ENCODE measurements at regions of chr13 and their contacts with region 1.

Region 1: GRCh38 chr13:48233046-48233907 is at the start of gene ITM2B:
- DNase-seq: peak; percentile 72 to 79 (median 76)
- H3K4me3 ChIP-seq: peak within 1 kb of the TSS; percentile 68 to 92
- H3K4me3 Mint-ChIP-seq: peak within 1 kb of the TSS; percentile 95 to 99 (median 98)
- H3K27ac ChIP-seq: peak within 1 kb of the TSS; percentile 98
- H3K27ac Mint-ChIP-seq: peak within 1 kb of the TSS; percentile 93 to 99 (median 98)
- H3K4me1 ChIP-seq: peaks cover 45% of the 10 kb centered on the region
- H3K4me1 Mint-ChIP-seq: peaks cover 37 to 69% (median 46%) of the 10 kb centered on the region in 4 donors
- H3K27me3 ChIP-seq: no peaks in the 10 kb centered on the region
- H3K27me3 Mint-ChIP-seq: no peaks in the 10 kb centered on the region
- total RNA-seq, gene ITM2B: 653 to 670 TPM

Region 2: DNA sequence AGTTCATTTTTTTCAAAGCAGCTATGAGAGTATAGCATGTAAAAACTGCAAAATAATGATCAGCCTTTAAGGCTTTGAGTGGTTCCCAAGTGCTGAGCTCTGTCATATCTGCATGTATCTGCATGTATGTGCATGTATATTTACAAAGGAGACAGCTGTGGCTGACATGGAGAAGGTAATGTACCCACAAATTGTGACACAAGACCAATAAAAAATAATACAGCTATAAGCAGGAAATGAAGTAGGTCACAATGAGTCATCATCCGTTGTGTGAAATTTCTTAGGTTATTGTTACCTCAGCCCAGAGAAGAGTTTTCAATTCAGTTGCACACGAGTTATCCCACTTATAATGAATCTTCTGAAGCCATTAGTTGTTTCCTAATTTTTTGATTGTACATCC is 77.4 kb before region 1 on chr13:
- CTCF ChIA-PET with region 1: interaction called, 22 read pairs
- POLR2A ChIA-PET with region 1: interaction called, 97 read pairs
- intact Hi-C with region 1: loop called (anchors 1 kb)
- DNase-seq: peak; percentile 69 to 83 (median 81)
- H3K4me3 ChIP-seq: peak overlapping the region in 1 of 2 donors; percentile 46
- H3K4me3 Mint-ChIP-seq: peak overlapping the region; percentile 40 to 84 (median 68)
- H3K27ac ChIP-seq: peak overlapping the region; percentile 78
- H3K27ac Mint-ChIP-seq: peak overlapping the region; percentile 85 to 98 (median 95)
- H3K4me1 ChIP-seq: peaks cover 89% of the 10 kb centered on the region
- H3K4me1 Mint-ChIP-seq: peaks cover 50 to 91% (median 75%) of the 10 kb centered on the region in 4 donors
- H3K27me3 ChIP-seq: no peaks in the 10 kb centered on the region
- H3K27me3 Mint-ChIP-seq: no peaks in the 10 kb centered on the region

Region 3: DNA sequence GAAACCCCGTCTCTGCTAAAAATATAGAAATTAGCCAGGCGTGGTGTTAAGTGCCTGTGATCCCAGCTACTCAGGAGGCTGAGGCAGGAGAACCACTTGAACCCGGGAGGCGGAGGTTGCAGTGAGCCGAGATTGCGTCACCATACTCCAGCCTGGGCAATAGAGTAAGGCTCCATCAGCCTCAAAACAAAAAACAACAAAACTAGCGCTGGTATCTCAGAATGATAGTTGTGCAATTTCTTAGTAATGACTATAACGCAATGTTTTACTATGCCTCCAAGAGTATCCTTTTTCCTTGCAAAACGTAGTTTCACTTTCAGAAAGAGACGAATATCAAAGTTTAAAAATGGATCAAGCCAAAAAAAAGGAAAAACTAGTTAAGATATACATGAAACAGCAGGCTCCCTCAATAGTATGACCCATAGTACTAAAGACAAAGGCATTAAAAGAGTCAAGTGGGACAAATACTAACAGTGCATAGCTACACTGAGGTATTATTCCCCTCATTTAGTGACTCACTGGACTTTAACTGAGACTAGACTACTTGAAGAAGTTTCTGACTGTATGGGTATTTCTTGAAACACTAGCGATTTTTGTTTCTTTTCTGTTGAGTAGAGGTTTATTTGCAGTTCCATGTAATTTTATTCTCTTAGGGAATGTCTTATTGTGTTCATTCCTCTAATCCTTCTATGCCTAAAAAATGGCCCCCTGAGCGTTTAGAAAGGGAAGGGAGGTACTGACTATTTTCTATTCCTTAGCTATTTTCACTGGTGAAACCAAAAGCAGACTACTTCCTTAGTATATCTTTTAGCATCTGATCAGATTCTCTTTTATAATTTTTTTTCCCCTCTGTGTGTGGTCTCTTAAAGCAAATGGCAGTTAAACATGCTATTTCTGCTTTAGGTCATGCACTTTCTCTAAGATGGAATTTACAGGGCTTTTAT is 10.6 kb before region 1 on chr13:
- CTCF ChIA-PET with region 1: interaction called, 30 read pairs
- POLR2A ChIA-PET with region 1: interaction called, 180 read pairs
- intact Hi-C with region 1: loop called (anchors 1 kb)
- DNase-seq: peak in 1 of 5 donors; percentile 20
- H3K4me3 ChIP-seq: peak overlapping the region in 1 of 2 donors; percentile 13
- H3K4me3 Mint-ChIP-seq: peak overlapping the region; percentile 57 to 88 (median 81)
- H3K27ac ChIP-seq: peak overlapping the region; percentile 71
- H3K27ac Mint-ChIP-seq: peak overlapping the region; percentile 58 to 98 (median 88)
- H3K4me1 ChIP-seq: peaks cover 62% of the 10 kb centered on the region
- H3K4me1 Mint-ChIP-seq: peaks cover 44 to 63% (median 54%) of the 10 kb centered on the region in 4 donors
- H3K27me3 ChIP-seq: no peaks in the 10 kb centered on the region
- H3K27me3 Mint-ChIP-seq: no peaks in the 10 kb centered on the region

Region 4: GRCh38 chr13:48303359-48304142 is 70.3 kb after region 1 on chr13 and contains the start of gene RB1:
- CTCF ChIA-PET with region 1: no interaction called
- POLR2A ChIA-PET with region 1: interaction called, 6 read pairs
- intact Hi-C with region 1: loop called (anchors 2 kb)
- DNase-seq: peak; percentile 91 to 93 (median 92)
- H3K4me3 ChIP-seq: peak within 1 kb of the TSS; percentile 76 to 94
- H3K4me3 Mint-ChIP-seq: peak within 1 kb of the TSS; percentile 95 to 99 (median 97)
- H3K27ac ChIP-seq: peak within 1 kb of the TSS; percentile 96
- H3K27ac Mint-ChIP-seq: peak within 1 kb of the TSS; percentile 98 to 100 (median 99)
- H3K4me1 ChIP-seq: peaks cover 38% of the 10 kb centered on the region
- H3K4me1 Mint-ChIP-seq: peaks cover 21 to 41% (median 29%) of the 10 kb centered on the region in 4 donors
- H3K27me3 ChIP-seq: no peaks in the 10 kb centered on the region
- H3K27me3 Mint-ChIP-seq: no peaks in the 10 kb centered on the region
- total RNA-seq, gene RB1: 20.0 to 26.0 TPM

Region 5: GRCh38 chr13:48769107-48769704 is 535.9 kb after region 1 on chr13:
- CTCF ChIA-PET with region 1: no interaction called
- POLR2A ChIA-PET with region 1: no interaction called
- intact Hi-C with region 1: loop called (anchors 1 kb)
- DNase-seq: peak; percentile 83 to 85 (median 85)
- H3K4me3 ChIP-seq: no peak overlapping the region
- H3K4me3 Mint-ChIP-seq: peak overlapping the region in 1 of 8 donors; percentile 11
- H3K27ac ChIP-seq: no peak overlapping the region
- H3K27ac Mint-ChIP-seq: peak overlapping the region in 2 of 7 donors; percentile 5 to 58
- H3K4me1 ChIP-seq: no peaks in the 10 kb centered on the region
- H3K4me1 Mint-ChIP-seq: peaks cover 3 to 15% (median 5%) of the 10 kb centered on the region in 4 donors
- H3K27me3 ChIP-seq: no peaks in the 10 kb centered on the region
- H3K27me3 Mint-ChIP-seq: peaks cover 6 to 8% of the 10 kb centered on the region in 2 donors

Measured in CD4-positive, alpha-beta memory T cell (primary cell).